Ovary (tissue), 10 donors: ENCODE measurements at regions of chr7 and their contacts with region 1.

Region 1: DNA sequence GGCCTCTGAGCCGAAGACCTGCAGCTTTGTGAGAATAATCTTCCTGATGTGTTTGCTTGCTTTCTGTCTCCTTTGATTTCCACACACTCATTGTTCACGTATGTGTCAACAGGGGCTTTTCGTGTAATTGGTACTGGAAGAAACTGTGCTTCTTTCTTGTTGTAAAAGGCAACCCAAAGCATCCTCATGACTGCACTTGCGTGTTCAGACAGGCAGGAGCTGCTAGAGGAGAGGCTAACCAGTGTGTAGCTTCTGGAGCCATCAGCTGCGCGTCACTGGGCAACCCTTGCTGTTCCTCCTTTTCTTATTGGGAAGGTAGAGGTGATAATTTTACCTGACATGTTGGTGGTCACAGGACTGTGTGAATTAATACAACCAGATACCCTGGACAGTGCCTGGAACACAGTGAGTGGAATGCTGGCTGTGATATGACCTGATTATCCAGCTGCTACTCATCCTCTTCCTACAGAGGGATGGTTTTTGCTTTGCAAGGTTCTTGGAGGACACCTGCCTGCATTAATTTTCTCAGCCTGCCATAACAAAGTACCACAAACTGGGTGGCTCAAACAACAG is 213.0 kb downstream of the ABCA13 start:
- DNase-seq: no peak
- H3K4me3 ChIP-seq: no peak overlapping the region
- H3K27ac ChIP-seq: no peak overlapping the region
- H3K4me1 ChIP-seq: no peaks in the 10 kb centered on the region
- H3K27me3 ChIP-seq: no peaks in the 10 kb centered on the region
- CTCF ChIP-seq: no peak
- EP300 ChIP-seq: no peak
- POLR2A ChIP-seq: no peak

Region 2: GRCh38 chr7:47836503-47837202 is 547.6 kb before region 1 on chr7:
- intact Hi-C with region 1: loop called in 1 of 4 experiments (anchors 5 kb)
- DNase-seq: no peak
- H3K4me3 ChIP-seq: no peak overlapping the region
- H3K27ac ChIP-seq: no peak overlapping the region
- H3K4me1 ChIP-seq: no peaks in the 10 kb centered on the region
- H3K27me3 ChIP-seq: no peaks in the 10 kb centered on the region
- CTCF ChIP-seq: no peak
- EP300 ChIP-seq: no peak
- POLR2A ChIP-seq: no peak